ENCODE measurements at regions of chr20 and their contacts with region 1.

Region 1: DNA sequence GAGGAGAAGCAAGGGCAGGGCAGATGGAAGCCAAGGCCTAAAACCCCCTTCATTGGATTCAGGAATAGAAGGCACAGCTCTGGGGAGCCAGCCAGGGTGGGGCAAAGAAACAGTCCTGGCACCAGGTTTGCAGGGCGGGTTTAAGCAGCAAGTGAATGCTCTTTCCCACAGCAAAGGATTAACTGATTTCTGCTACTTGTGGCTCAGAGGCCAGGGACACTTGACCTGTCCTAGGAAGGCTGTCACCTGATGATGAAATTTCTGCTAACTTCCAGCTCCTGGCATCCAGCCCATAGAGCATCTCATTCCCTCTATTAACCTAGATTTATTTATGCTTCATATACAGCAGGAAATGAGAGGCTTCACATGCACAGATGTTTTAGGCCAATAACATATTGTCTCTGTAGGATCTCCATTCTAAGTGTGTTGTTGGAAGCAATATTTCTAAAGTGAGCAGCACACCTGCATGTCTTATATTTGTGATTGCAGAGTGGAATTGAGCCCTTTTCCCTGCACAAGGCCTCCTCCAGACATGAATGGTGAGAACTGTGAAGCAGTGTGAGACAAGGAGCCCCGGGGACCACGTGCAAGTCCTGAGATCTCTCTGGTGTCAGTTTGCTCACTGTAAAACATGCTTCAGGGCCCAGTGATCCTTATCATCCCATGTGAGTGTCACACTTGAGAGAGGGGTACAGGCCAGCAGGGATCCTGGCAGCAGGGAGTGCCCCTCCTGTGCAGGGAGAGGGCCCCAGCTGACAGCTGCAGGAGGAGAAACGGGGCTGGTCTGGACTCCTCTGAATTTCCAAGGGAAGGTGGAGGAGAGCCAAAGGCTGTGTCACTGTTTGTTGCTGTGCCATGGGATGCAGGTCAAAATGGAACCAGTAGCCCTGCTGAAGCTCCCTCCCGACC is 41.1 kb upstream of the CST5 start:
- DNase-seq: no peak
- ATAC-seq: no peak
- H3K4me3 ChIP-seq: no peak overlapping the region
- H3K4me3 Mint-ChIP-seq: no peak overlapping the region
- H3K27ac ChIP-seq: peak overlapping the region in 1 of 2 donors; percentile 49
- H3K27ac Mint-ChIP-seq: peak overlapping the region; percentile 86
- H3K4me1 ChIP-seq: peaks cover 42% of the 10 kb centered on the region
- H3K4me1 Mint-ChIP-seq: peaks cover 23% of the 10 kb centered on the region
- H3K27me3 ChIP-seq: no peaks in the 10 kb centered on the region
- H3K27me3 Mint-ChIP-seq: no peaks in the 10 kb centered on the region
- CTCF ChIP-seq: no peak

Region 2: GRCh38 chr20:23680146-23680545 is 240.5 kb before region 1 on chr20:
- CTCF ChIA-PET with region 1: no interaction called
- POLR2A ChIA-PET with region 1: no interaction called
- intact Hi-C with region 1: no loop called
- DNase-seq: no peak
- ATAC-seq: no peak
- H3K4me3 ChIP-seq: no peak overlapping the region
- H3K4me3 Mint-ChIP-seq: no peak overlapping the region
- H3K27ac ChIP-seq: no peak overlapping the region
- H3K27ac Mint-ChIP-seq: no peak overlapping the region
- H3K4me1 ChIP-seq: no peaks in the 10 kb centered on the region
- H3K4me1 Mint-ChIP-seq: no peaks in the 10 kb centered on the region
- H3K27me3 ChIP-seq: peaks cover 0 to 3% of the 10 kb centered on the region in 2 experiments
- H3K27me3 Mint-ChIP-seq: peaks cover 25% of the 10 kb centered on the region
- CTCF ChIP-seq: no peak

Region 3: GRCh38 chr20:23889775-23890211 is 30.9 kb before region 1 on chr20:
- CTCF ChIA-PET with region 1: no interaction called
- POLR2A ChIA-PET with region 1: no interaction called
- intact Hi-C with region 1: no loop called
- DNase-seq: peak; percentile 31 to 84 (median 58)
- ATAC-seq: peak; percentile 98
- H3K4me3 ChIP-seq: no peak overlapping the region
- H3K4me3 Mint-ChIP-seq: no peak overlapping the region
- H3K27ac ChIP-seq: no peak overlapping the region
- H3K27ac Mint-ChIP-seq: no peak overlapping the region
- H3K4me1 ChIP-seq: peaks cover 6% of the 10 kb centered on the region
- H3K4me1 Mint-ChIP-seq: peaks cover 4% of the 10 kb centered on the region
- H3K27me3 ChIP-seq: peaks cover 0 to 3% of the 10 kb centered on the region in 2 experiments
- H3K27me3 Mint-ChIP-seq: no peaks in the 10 kb centered on the region
- CTCF ChIP-seq: peak; percentile 76

Region 4: GRCh38 chr20:23907579-23907978 is 13.1 kb before region 1 on chr20:
- CTCF ChIA-PET with region 1: no interaction called
- POLR2A ChIA-PET with region 1: interaction called, 4 read pairs
- intact Hi-C with region 1: loop called in 1 of 2 experiments (anchors 2 kb)
- DNase-seq: no peak
- ATAC-seq: no peak
- H3K4me3 ChIP-seq: no peak overlapping the region
- H3K4me3 Mint-ChIP-seq: no peak overlapping the region
- H3K27ac ChIP-seq: no peak overlapping the region
- H3K27ac Mint-ChIP-seq: no peak overlapping the region
- H3K4me1 ChIP-seq: peaks cover 2% of the 10 kb centered on the region
- H3K4me1 Mint-ChIP-seq: peaks cover 25% of the 10 kb centered on the region
- H3K27me3 ChIP-seq: peaks cover 0 to 2% of the 10 kb centered on the region in 2 experiments
- H3K27me3 Mint-ChIP-seq: no peaks in the 10 kb centered on the region
- CTCF ChIP-seq: no peak

Measured in CD4-positive, alpha-beta T cell (primary cell).